Cardiac septum (tissue), 1 donor: ENCODE measurements at regions of chr19 and their contacts with region 1.

Region 1: GRCh38 chr19:13794757-13795589 is at the start of gene ZSWIM4:
- DNase-seq: peak; percentile 100
- total RNA-seq, gene ZSWIM4: 3.9 TPM

Region 2: DNA sequence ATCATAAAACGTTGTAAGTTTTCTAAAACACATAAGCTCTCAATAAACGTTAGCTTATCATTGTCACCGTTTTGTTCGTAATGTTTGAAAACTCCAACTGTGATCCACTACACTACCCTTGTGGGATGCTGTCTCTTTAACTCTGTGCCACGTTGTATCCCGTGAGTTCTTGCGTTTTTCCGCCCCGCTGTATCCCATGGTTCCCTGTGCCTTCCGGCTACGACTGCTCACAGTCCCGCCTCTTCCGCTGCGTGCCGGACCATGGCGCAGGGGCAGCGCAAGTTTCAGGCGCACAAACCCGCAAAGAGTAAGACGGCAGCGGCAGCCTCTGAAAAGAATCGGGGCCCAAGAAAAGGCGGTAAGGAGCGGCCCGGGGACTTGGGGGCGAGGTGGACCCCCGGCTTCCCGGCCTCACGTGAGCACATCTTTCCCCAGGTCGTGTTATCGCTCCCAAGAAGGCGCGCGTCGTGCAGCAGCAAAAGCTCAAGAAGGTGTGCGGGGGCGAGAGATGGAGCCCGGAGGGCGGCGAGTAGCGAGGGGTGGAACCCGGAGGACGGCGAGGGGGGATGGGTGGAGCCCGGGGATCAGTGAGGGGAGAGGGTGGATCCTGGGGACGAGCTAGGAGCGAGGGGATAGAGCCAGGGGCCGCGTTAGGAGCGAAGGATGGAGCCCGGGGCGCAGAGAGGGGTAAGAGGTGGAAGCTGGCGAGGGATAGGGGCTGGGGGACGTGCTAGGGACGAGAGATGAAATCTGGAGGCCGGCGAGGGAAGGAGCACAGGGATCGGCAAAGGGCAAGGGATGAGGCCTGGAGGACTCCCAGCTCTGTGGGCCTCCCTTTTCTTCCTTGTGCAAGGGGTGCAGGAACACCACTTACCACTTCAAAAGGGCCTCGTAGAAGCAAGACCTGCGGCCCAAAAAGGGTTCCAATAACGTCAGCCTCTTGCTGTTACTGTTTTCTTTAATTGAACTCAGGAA is 20.5 kb before region 1 on chr19 and contains the start of gene C19orf53:
- intact Hi-C with region 1: loop called (anchors 2 kb)
- DNase-seq: peak; percentile 96
- total RNA-seq, gene C19orf53: 91.2 TPM

Region 3: DNA sequence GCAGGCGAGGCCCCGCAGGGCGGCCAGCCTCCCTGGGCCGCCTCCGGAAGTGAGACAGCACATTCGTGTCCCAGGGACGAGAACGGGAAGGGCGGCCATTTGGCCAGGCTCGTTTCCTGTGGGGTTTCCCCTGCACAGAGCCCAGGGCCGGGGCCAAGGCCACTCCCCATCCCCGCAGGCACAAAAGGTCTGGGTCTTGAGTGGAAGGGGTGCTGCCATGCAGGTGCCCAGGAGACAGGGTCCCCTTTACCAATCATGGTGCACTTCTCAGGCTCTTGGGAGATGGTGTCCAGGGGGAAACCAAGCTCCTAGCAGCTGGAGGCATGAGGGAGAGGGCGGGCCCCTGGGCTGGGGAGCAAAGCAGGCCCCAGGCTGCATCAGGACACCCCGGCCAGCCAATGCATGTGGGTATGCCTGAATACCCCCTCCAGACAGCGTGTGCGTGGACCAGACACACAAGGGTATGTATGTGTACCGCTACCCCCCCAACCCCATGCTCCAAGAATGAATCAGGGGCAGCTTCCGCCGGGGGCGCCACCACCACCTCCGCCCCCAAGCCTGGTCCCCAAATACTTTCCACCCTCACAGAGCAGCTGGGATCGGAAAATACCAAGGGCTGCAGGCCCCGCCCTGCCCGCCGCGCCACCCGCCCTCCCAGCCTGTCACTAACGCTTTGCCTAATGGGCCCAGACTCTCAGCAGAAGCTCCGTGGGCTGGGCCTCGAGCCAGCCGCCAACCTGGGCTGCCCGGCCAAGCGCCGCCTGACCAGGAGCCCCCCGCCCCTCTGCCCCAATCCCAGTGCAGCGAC is 44.4 kb after region 1 on chr19:
- intact Hi-C with region 1: loop called (anchors 2 kb)
- DNase-seq: peak; percentile 99

Region 4: DNA sequence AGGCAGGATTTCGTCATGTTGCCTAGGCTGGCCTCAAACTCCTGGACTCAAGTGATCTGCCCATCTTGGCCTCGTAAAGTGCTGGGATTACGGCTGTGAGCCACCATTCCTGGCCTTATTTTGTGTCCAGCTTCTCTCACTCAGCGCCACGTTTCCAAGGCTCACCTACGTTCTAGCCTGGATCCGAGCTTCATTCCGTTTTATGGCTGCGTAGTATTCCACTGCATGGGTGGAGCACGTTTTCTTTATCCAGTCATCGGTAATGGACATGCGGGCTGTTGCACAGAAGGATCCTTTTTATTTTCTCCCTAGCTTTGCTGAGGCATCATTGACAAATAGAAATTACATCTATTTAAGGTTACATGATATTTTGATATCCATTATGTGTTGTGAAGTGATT is 394.4 kb after region 1 on chr19:
- intact Hi-C with region 1: no loop called
- DNase-seq: no peak